Activated T-helper 1 cell treated with anti-CD3 and anti-CD28 coated beads, Interleukin-12 subunit alpha, Interleukin-12 subunit beta, Interleukin-2, Interleukin-4 antibody, amounts not matched to agents 30 ng/mL and 10 ng/mL and 1 ng/mL, durations not matched to agents 14 hours and 24 hours and 36 hours (primary cell): ENCODE measurements at regions of chr14 and their contacts with region 1.

Region 1: GRCh38 chr14:34227834-34228649 is 234.0 kb downstream of the SPTSSA start:
- DNase-seq: peak; percentile 45
- H3K4me3 Mint-ChIP-seq: peak overlapping the region; percentile 40
- H3K27ac Mint-ChIP-seq: no peak overlapping the region
- H3K4me1 Mint-ChIP-seq: peaks cover 16% of the 10 kb centered on the region
- H3K27me3 Mint-ChIP-seq: peaks cover 16% of the 10 kb centered on the region

Region 2: DNA sequence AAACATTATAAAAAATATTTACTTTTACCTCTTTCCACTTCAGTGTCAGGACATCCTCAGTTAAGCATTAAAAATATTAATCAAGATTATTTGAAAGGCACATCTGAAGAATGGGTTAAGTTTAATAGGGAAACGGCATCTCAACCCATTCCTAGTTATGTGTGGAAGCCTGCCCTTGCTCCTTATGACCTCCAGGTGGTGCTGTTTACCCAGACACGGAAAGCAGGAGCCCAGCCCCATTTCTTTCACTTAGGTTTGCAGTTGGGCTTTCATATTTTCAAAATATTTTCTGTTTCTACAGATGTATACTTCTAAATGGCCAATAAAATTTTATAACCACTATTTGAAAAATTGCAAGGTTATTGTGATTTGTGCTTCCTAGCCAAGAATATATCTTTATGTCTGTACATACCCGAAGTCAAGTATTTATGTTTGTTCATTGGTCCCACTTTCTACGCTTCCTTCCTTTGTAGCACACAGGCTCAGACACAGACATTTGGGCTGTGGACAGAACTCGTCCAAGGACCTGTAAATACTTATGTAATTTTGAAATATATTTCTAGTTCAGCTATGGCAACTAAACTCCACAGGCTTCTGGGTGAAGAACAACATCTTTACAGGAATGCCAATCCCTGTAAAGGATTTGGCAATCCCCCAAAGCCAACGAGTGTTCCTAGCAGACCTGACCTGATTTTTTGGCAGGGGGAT is 1651.8 kb before region 1 on chr14:
- intact Hi-C with region 1: loop called (anchors 1 kb)
- DNase-seq: peak; percentile 6
- H3K4me3 Mint-ChIP-seq: no peak overlapping the region
- H3K27ac Mint-ChIP-seq: no peak overlapping the region
- H3K4me1 Mint-ChIP-seq: no peaks in the 10 kb centered on the region
- H3K27me3 Mint-ChIP-seq: peaks cover 15% of the 10 kb centered on the region

Region 3: DNA sequence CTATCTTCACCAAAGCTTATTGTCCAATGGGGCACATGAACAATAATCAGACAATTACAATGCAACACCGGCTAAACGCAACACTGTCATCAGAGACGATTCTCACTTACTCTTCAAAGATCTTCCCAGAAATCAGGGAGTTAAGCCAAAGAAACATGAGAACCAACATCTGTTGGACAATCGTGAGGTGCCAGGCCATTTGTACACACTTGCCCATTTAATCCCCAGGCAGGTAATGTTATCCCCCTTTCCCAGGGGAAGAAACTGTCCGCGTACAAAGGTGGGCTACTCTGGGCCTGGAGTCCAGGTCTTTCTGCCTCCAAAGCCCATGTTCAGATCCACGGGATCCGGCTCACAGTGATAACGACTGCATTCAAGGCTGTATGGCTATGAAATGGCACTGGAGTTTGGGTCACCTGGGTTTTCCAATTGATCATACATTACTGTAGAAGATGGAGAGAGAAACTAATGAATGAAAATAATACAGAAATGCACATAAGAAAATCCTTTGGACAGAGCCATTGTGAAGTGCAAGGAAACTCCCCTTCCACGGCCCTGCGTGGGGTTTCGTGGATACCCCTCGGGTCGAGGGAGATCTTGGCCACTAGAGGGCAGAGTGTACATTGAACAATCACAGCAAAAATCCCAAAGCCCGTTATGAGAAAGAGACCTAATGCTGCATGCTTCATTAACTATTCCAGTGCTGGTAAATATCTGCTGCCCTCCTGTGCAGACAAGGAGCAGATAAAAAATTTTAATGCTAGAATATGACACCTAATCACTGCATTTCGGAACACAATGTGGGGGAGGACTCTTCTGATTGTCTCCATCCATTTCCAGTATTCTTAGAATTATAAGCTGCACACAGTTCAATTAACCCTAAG is 388.6 kb before region 1 on chr14:
- intact Hi-C with region 1: loop called (anchors 1 kb)
- DNase-seq: peak; percentile 49
- H3K4me3 Mint-ChIP-seq: no peak overlapping the region
- H3K27ac Mint-ChIP-seq: no peak overlapping the region
- H3K4me1 Mint-ChIP-seq: peaks cover 58% of the 10 kb centered on the region
- H3K27me3 Mint-ChIP-seq: peaks cover 3% of the 10 kb centered on the region

Region 4: DNA sequence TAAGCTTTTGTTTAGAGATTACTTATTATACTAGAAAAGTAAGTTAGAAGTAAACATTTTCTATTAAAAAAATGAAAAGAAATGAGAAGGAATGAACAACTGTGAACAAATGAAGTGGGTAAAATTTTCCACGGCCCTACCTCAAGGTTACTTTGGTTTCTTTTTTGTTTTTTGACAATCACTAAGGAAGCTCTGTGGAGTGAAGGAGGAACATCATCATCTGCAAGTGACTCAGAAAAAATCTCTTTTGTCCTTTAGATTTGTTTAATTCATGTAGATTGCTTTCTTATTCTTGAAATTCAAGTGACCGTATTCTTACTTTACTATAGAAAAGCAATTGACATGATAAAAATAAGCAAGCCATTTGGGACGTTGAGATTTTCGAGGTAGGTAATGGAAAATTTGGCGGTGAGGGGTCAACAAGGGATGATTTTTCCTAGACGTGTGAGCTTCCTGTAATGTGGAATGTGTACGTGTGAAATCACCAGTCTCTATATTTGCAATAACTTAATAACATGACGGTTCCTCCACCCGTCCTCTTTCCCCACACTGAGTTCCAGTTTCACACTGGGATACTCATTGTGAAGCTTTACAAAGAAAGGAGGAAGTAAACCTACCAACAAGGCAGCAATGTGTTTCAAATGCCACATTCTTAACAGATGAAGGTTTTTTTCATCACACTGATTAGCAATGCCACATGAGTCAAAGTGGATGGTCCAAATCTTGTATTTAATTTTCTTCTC is 214.9 kb before region 1 on chr14:
- intact Hi-C with region 1: loop called (anchors 5 kb)
- DNase-seq: no peak
- H3K4me3 Mint-ChIP-seq: peak overlapping the region; percentile 47
- H3K27ac Mint-ChIP-seq: peak overlapping the region; percentile 82
- H3K4me1 Mint-ChIP-seq: peaks cover 47% of the 10 kb centered on the region
- H3K27me3 Mint-ChIP-seq: no peaks in the 10 kb centered on the region

Region 5: DNA sequence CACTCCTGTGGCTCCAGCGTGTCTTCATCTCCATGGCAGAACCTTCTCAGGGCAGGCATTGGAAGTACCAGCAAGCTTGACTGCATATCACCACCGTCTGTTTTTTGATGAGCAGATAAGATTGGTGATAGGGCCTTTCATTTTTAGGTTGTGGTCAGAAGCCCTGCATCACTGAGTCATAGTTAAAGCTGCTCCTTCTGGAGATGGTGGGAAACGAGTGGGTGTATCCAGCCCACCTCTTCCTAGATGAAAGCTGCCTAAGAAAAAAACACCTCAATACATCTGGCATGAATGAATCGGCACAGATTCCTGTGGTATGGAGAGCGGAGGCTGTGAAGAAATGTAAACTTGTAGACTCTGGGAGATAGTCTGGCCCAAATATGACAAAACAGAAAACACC is 28.5 kb before region 1 on chr14:
- intact Hi-C with region 1: loop called (anchors 2 kb)
- DNase-seq: no peak
- H3K4me3 Mint-ChIP-seq: peak overlapping the region; percentile 56
- H3K27ac Mint-ChIP-seq: peak overlapping the region; percentile 63
- H3K4me1 Mint-ChIP-seq: peaks cover 56% of the 10 kb centered on the region
- H3K27me3 Mint-ChIP-seq: no peaks in the 10 kb centered on the region

Region 6: DNA sequence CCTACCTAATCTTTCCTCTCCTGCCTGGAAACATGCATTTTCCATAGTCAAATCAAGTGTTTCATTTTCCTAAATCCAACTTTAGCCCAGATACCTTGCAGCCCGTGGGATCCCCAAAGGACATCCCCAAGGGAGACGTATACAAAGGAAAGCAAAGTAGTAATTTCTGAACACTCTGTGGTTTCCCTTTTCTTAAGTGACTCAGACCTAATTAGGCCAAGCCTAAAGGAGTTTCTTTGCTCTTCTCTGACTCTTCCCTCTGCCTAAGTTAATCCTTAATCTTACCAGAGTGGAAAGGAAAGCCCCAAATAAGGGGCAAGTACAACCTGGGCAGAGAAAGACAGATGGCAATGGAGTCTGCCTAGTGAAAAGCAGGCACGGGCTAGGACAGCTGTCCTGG is 16.3 kb before region 1 on chr14:
- intact Hi-C with region 1: no loop called
- DNase-seq: no peak
- H3K4me3 Mint-ChIP-seq: peak overlapping the region; percentile 22
- H3K27ac Mint-ChIP-seq: peak overlapping the region; percentile 47
- H3K4me1 Mint-ChIP-seq: peaks cover 22% of the 10 kb centered on the region
- H3K27me3 Mint-ChIP-seq: peaks cover 5% of the 10 kb centered on the region

Region 7: GRCh38 chr14:34262127-34262910 is 34.3 kb after region 1 on chr14:
- intact Hi-C with region 1: no loop called
- DNase-seq: no peak
- H3K4me3 Mint-ChIP-seq: no peak overlapping the region
- H3K27ac Mint-ChIP-seq: no peak overlapping the region
- H3K4me1 Mint-ChIP-seq: no peaks in the 10 kb centered on the region
- H3K27me3 Mint-ChIP-seq: peaks cover 13% of the 10 kb centered on the region